ENCODE measurements at regions of chr7 and their contacts with region 1.

Region 1: DNA sequence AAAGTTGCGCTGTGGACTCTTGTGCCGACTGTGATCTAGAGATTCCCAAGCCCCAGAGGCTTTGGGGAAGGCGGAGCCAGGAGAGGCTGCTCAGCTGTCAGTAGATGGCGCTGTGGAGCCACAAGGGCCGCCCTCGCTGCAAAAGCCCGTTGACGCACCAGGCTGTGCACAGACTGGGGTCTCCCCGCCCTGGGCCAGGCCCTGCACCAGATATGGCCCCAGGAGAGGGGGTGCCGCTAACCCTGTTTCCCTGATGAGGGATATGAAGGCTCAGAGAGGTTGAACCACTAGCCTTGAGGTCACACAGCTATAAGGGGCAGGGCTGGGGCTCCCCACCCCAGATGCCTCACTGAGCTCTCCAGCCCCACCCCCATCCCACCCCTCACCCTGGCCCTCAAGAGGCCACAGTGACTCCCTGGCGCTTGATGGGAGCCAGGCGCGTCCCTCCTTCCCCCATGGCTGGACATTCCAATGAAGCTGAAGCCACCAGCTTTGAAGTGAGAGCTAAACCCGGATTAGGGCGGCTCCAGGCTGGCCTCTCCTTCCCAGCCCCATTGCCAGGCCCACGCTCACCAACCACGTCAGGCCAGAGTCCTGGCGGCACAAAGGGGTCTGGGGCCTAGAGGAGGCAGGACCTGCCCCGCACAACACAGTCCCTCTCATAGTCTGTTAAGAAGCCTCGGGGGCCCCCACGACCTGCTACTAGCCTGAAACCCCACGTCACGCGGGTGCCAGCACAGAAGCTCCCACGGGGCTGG is 26.4 kb downstream of the MYL10 start:
- DNase-seq: peak; percentile 63
- H3K27ac ChIP-seq: no peak overlapping the region
- CTCF ChIP-seq: peak; percentile 98

Region 2: DNA sequence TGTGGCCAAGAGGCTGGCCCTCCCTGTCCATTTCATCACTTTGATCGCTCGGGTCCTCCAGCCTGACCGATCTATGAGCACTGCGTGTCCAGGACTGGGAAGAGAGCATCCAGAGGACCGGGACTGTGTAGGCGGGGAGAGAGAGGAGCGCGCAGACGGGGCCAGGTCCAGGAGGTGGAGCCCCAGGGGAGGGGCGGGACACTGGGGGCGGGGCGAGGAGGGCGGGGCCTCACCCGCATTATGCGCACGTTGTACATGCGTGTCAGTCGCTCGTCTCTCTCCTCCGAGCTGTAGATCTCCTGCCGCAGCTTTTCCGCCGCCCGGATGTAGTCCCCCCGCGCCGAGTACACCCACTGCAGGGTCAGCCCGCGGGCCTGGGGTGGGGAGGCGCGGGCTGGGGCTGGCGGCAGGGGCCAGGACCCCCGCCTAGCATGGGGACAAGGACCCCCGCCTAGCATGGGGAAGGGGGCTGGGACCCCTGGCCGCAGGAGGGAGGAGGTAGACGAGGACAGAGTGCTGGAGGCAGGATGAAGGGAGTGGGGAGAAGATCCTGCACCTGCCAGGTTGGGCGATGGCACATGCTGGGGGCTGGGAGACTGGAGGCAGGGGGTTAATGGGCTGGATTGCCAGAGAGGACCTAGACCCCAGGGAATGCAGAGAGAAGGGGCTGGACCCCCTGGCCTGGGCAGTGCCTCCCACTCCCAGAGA is 976.0 kb before region 1 on chr7:
- CTCF ChIA-PET with region 1: no interaction called
- POLR2A ChIA-PET with region 1: no interaction called
- DNase-seq: peak; percentile 98
- H3K27ac ChIP-seq: peak overlapping the region; percentile 67
- CTCF ChIP-seq: no peak

Region 3: DNA sequence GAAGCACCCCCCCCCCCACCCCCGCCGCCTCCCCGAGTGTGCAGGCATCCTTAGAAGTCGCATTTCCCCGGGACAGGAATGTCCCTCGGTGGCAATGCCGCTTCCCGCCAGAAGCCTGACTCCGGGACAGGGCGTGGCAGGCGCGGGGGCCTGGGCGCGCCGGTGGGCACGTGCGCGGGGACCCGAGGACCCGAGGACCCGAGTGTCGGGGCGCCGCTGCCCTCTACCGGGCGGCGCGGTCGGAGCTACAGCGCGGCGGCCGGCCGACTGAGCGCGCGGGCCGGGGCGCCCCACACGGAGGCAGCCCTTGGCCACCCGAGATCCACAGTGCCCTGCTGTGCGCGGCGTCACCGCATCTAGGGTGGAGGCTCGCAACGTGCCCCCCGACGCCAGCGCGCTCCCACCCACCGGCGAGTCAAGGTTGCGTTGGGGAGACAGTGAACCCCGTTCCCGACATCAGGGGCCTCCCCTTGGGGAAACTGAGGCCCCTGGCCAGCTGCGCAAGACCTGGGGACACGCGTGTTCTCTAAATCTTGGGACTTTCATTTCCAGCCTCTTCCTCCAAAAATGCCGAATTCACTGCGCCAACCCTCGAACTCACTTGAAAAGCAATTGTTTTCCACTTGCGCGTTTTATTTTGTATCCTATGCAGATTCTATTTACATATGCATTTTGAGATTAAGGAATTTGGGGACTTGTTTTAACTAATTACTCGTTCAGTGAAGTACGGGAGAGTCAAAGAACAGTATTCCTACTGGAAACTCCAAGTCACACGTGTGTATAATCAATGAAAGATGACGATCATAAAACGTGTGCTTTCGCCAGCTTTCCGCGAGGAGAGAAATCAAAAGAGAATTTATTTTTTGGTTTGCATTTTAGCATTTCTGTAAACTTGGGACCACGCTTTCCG is 211.7 kb after region 1 on chr7:
- CTCF ChIA-PET with region 1: interaction called, 17 read pairs
- POLR2A ChIA-PET with region 1: no interaction called
- DNase-seq: peak; percentile 73
- H3K27ac ChIP-seq: peak overlapping the region; percentile 89
- CTCF ChIP-seq: peak; percentile 93

Region 4: DNA sequence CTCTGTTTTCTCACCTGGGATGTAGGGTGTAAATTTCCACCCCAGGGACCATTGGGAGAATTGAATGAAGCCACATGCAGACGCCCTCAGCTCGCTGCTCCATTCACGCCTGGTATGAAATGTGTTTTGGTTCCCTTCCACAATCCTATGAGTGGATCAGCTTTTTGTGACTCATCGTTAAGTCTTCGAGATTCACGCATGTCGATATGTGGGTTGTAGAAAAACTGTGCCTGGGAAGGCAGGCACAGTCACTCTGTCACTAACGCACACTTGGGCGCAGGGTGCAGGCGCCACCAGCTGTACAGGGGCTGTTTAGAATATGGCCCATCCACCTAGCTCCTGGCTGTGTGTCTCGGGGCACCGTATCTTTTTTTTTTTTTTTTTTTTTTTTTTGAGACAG is 619.8 kb after region 1 on chr7:
- CTCF ChIA-PET with region 1: interaction called, 3 read pairs
- POLR2A ChIA-PET with region 1: interaction called, 11 read pairs
- DNase-seq: no peak
- H3K27ac ChIP-seq: peak overlapping the region; percentile 68
- CTCF ChIP-seq: no peak

Measured in RWPE1 (cell line).